Spleen (tissue), 13 donors: ENCODE measurements at regions of chr4 and their contacts with region 1.

Region 1: DNA sequence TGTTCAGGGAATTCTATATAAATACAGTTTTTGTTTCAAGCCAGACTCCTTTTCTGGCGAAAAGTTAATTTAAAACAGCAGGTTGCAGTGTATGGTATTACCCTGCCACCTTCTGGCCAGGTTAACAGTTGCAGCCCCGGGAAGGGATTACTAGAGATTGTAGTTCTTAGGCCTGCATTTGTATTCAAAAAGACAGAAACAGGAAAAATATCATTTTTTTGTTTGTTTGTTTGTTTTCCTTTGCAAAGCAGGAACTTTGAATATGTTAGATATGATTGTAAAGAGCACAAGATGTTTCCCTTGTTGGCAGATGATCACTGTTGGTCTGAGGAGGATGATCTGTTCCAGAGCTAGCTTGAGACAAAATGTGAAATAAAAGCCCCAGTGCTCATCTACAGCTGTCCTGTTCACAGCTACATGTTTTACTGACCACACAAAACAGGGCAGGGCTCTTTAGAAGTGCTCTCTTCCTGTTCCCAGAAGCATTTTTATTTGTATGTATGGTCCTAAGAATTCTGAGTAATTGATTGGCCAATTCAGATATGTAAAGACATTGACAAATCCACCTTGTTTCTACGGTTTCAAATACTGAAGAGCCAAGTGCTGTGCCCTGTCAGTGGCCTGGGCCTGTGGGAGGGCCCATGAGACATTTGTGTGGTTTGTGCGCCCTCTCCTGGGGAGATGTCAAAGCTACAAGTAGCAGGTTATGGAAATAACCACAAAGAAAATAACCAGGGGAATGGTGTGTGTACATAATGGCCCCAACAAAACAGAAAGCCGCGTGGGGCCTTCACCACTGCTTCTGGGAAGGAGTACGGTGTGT is 57.9 kb downstream of the CLDN22 start:
- DNase-seq: peak; percentile 85
- H3K4me3 ChIP-seq: no peak overlapping the region
- H3K27ac ChIP-seq: peak overlapping the region in 3 of 8 donors; percentile 32 to 36 (median 32)
- H3K4me1 ChIP-seq: peaks cover 0 to 11% (median 5%) of the 10 kb centered on the region in 6 donors
- H3K27me3 ChIP-seq: no peaks in the 10 kb centered on the region
- CTCF ChIP-seq: peak; percentile 50 to 73 (median 66)
- POLR2A ChIP-seq: no peak

Region 2: GRCh38 chr4:182938205-182938645 is 323.9 kb before region 1 on chr4:
- intact Hi-C with region 1: loop called (anchors 10 kb)
- DNase-seq: peak; percentile 87
- H3K4me3 ChIP-seq: no peak overlapping the region
- H3K27ac ChIP-seq: no peak overlapping the region
- H3K4me1 ChIP-seq: peaks cover 0 to 7% (median 3%) of the 10 kb centered on the region in 6 donors
- H3K27me3 ChIP-seq: peaks cover 0 to 9% (median 0%) of the 10 kb centered on the region in 7 donors
- CTCF ChIP-seq: peak; percentile 39 to 85 (median 70)
- POLR2A ChIP-seq: no peak

Region 3: GRCh38 chr4:183142571-183143550 is 119.3 kb before region 1 on chr4:
- intact Hi-C with region 1: no loop called
- DNase-seq: no peak
- H3K4me3 ChIP-seq: no peak overlapping the region
- H3K27ac ChIP-seq: peak overlapping the region in 5 of 8 donors; percentile 4 to 62 (median 25)
- H3K4me1 ChIP-seq: peaks cover 0 to 37% (median 10%) of the 10 kb centered on the region in 6 donors
- H3K27me3 ChIP-seq: no peaks in the 10 kb centered on the region
- CTCF ChIP-seq: no peak
- POLR2A ChIP-seq: no peak